ENCODE measurements at regions of chr7 and their contacts with region 1.

Region 1: DNA sequence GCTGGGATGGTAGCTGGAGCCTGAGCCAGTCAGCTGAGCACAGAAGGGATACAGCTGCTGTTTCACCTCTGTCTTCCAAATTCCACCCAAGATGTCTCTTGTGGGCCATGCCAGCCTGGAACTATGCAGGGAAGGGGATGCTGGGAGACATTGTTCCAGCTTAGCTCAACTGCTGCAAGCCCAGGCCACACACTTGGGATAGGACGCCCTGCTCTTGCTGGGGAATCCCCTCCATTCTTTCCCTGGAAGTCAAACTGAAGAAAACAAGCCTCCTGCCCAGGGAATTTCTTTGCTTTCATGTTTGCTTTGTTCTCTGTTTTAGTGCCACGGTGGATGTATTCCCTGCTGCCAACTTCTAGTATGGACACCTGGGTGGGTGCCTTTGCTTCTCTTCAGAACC is 55.2 kb upstream of the CDK13 start:
- DNase-seq: peak in 1 of 9 experiments; percentile 31
- ATAC-seq: no peak
- H3K4me3 ChIP-seq: no peak overlapping the region
- H3K4me3 Mint-ChIP-seq: no peak overlapping the region
- H3K27ac ChIP-seq: no peak overlapping the region
- H3K27ac Mint-ChIP-seq: no peak overlapping the region
- H3K4me1 ChIP-seq: no peaks in the 10 kb centered on the region
- H3K4me1 Mint-ChIP-seq: peaks cover 2% of the 10 kb centered on the region
- H3K27me3 ChIP-seq: no peaks in the 10 kb centered on the region
- H3K27me3 Mint-ChIP-seq: peaks cover 7% of the 10 kb centered on the region
- CTCF ChIP-seq: no peak

Region 2: GRCh38 chr7:39536951-39537350 is 358.0 kb before region 1 on chr7:
- CTCF ChIA-PET with region 1: no interaction called
- POLR2A ChIA-PET with region 1: no interaction called
- intact Hi-C with region 1: no loop called
- DNase-seq: no peak
- ATAC-seq: no peak
- H3K4me3 ChIP-seq: no peak overlapping the region
- H3K4me3 Mint-ChIP-seq: no peak overlapping the region
- H3K27ac ChIP-seq: no peak overlapping the region
- H3K27ac Mint-ChIP-seq: no peak overlapping the region
- H3K4me1 ChIP-seq: no peaks in the 10 kb centered on the region
- H3K4me1 Mint-ChIP-seq: no peaks in the 10 kb centered on the region
- H3K27me3 ChIP-seq: no peaks in the 10 kb centered on the region
- H3K27me3 Mint-ChIP-seq: peaks cover 2% of the 10 kb centered on the region
- CTCF ChIP-seq: no peak

Region 3: GRCh38 chr7:39910108-39910869 is 15.4 kb after region 1 on chr7:
- CTCF ChIA-PET with region 1: interaction called, 41 read pairs
- POLR2A ChIA-PET with region 1: no interaction called
- intact Hi-C with region 1: no loop called
- DNase-seq: peak in 1 of 9 experiments; percentile 35
- ATAC-seq: no peak
- H3K4me3 ChIP-seq: no peak overlapping the region
- H3K4me3 Mint-ChIP-seq: no peak overlapping the region
- H3K27ac ChIP-seq: no peak overlapping the region
- H3K27ac Mint-ChIP-seq: no peak overlapping the region
- H3K4me1 ChIP-seq: no peaks in the 10 kb centered on the region
- H3K4me1 Mint-ChIP-seq: peaks cover 4% of the 10 kb centered on the region
- H3K27me3 ChIP-seq: no peaks in the 10 kb centered on the region
- H3K27me3 Mint-ChIP-seq: no peaks in the 10 kb centered on the region
- CTCF ChIP-seq: no peak

Region 4: GRCh38 chr7:39987476-39988347 is 92.8 kb after region 1 on chr7:
- CTCF ChIA-PET with region 1: interaction called, 9 read pairs
- POLR2A ChIA-PET with region 1: no interaction called
- intact Hi-C with region 1: loop called (anchors 1 to 5 kb)
- DNase-seq: peak in 6 of 9 experiments; percentile 16 to 72 (median 52)
- ATAC-seq: peak; percentile 87
- H3K4me3 ChIP-seq: no peak overlapping the region
- H3K4me3 Mint-ChIP-seq: peak overlapping the region; percentile 52
- H3K27ac ChIP-seq: peak overlapping the region; percentile 5 to 8
- H3K27ac Mint-ChIP-seq: peak overlapping the region; percentile 79
- H3K4me1 ChIP-seq: peaks cover 34% of the 10 kb centered on the region
- H3K4me1 Mint-ChIP-seq: peaks cover 51% of the 10 kb centered on the region
- H3K27me3 ChIP-seq: no peaks in the 10 kb centered on the region
- H3K27me3 Mint-ChIP-seq: no peaks in the 10 kb centered on the region
- CTCF ChIP-seq: no peak

Region 5: GRCh38 chr7:40041456-40041855 is 146.6 kb after region 1 on chr7:
- CTCF ChIA-PET with region 1: interaction called, 24 read pairs
- POLR2A ChIA-PET with region 1: no interaction called
- intact Hi-C with region 1: no loop called
- DNase-seq: no peak
- ATAC-seq: no peak
- H3K4me3 ChIP-seq: no peak overlapping the region
- H3K4me3 Mint-ChIP-seq: no peak overlapping the region
- H3K27ac ChIP-seq: no peak overlapping the region
- H3K27ac Mint-ChIP-seq: no peak overlapping the region
- H3K4me1 ChIP-seq: no peaks in the 10 kb centered on the region
- H3K4me1 Mint-ChIP-seq: peaks cover 24% of the 10 kb centered on the region
- H3K27me3 ChIP-seq: no peaks in the 10 kb centered on the region
- H3K27me3 Mint-ChIP-seq: no peaks in the 10 kb centered on the region
- CTCF ChIP-seq: no peak

Region 6: GRCh38 chr7:40057292-40057691 is 162.4 kb after region 1 on chr7:
- CTCF ChIA-PET with region 1: interaction called, 215 read pairs
- POLR2A ChIA-PET with region 1: interaction called, 4 read pairs
- intact Hi-C with region 1: loop called (anchors 1 kb)
- DNase-seq: no peak
- ATAC-seq: no peak
- H3K4me3 ChIP-seq: no peak overlapping the region
- H3K4me3 Mint-ChIP-seq: no peak overlapping the region
- H3K27ac ChIP-seq: no peak overlapping the region
- H3K27ac Mint-ChIP-seq: no peak overlapping the region
- H3K4me1 ChIP-seq: no peaks in the 10 kb centered on the region
- H3K4me1 Mint-ChIP-seq: peaks cover 8% of the 10 kb centered on the region
- H3K27me3 ChIP-seq: no peaks in the 10 kb centered on the region
- H3K27me3 Mint-ChIP-seq: no peaks in the 10 kb centered on the region
- CTCF ChIP-seq: no peak